Natural killer cell (primary cell): ENCODE measurements at regions of chr1 and their contacts with region 1.

Region 1: GRCh38 chr1:229661022-229661877 is 35.2 kb downstream of the URB2 start:
- DNase-seq: peak; percentile 53 to 80
- ATAC-seq: peak; percentile 60 to 76 (median 70)
- H3K4me3 ChIP-seq: no peak overlapping the region
- H3K4me3 Mint-ChIP-seq: no peak overlapping the region
- H3K27ac ChIP-seq: no peak overlapping the region
- H3K27ac Mint-ChIP-seq: no peak overlapping the region
- H3K4me1 ChIP-seq: peaks cover 13% of the 10 kb centered on the region
- H3K4me1 Mint-ChIP-seq: no peaks in the 10 kb centered on the region
- H3K27me3 ChIP-seq: no peaks in the 10 kb centered on the region
- H3K27me3 Mint-ChIP-seq: no peaks in the 10 kb centered on the region
- CTCF ChIP-seq: peak; percentile 73

Region 2: GRCh38 chr1:229507951-229508822 is 153.1 kb before region 1 on chr1 and contains the start of gene NUP133:
- intact Hi-C with region 1: no loop called
- DNase-seq: peak; percentile 98 to 100
- ATAC-seq: peak; percentile 92 to 96 (median 95)
- H3K4me3 ChIP-seq: peak within 1 kb of the TSS; percentile 83
- H3K4me3 Mint-ChIP-seq: peak within 1 kb of the TSS; percentile 92
- H3K27ac ChIP-seq: peak within 1 kb of the TSS; percentile 92
- H3K27ac Mint-ChIP-seq: peak within 1 kb of the TSS; percentile 96
- H3K4me1 ChIP-seq: peaks cover 7% of the 10 kb centered on the region
- H3K4me1 Mint-ChIP-seq: peaks cover 20 to 25% of the 10 kb centered on the region in 2 donors
- H3K27me3 ChIP-seq: no peaks in the 10 kb centered on the region
- H3K27me3 Mint-ChIP-seq: peaks cover 0 to 4% of the 10 kb centered on the region in 2 donors
- CTCF ChIP-seq: no peak
- total RNA-seq, gene NUP133: 34.5 to 40.1 (median 38.4) TPM

Region 3: DNA sequence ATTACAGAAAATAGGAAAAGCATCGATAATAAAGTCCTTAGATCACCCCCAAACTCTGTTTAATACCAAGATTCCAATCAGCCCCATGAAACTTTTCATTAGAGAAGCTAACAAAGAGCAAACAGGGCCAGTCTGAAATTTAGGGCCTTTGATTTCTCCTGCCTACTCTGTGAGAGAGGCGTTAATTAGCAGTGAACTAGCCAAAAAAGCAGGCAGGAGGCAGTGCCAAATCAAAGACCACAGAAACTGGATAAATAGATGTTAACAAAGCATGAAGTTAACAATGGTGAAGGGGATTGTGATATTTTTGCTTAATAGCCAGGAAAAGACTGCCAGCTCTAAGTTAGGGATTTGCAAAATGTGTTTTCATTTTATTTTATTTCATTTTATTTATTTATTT is 46.5 kb before region 1 on chr1:
- intact Hi-C with region 1: no loop called
- DNase-seq: no peak
- ATAC-seq: no peak
- H3K4me3 ChIP-seq: no peak overlapping the region
- H3K4me3 Mint-ChIP-seq: no peak overlapping the region
- H3K27ac ChIP-seq: no peak overlapping the region
- H3K27ac Mint-ChIP-seq: no peak overlapping the region
- H3K4me1 ChIP-seq: no peaks in the 10 kb centered on the region
- H3K4me1 Mint-ChIP-seq: peaks cover 4 to 9% of the 10 kb centered on the region in 2 donors
- H3K27me3 ChIP-seq: no peaks in the 10 kb centered on the region
- H3K27me3 Mint-ChIP-seq: no peaks in the 10 kb centered on the region
- CTCF ChIP-seq: no peak

Region 4: GRCh38 chr1:229685149-229685548 is 23.9 kb after region 1 on chr1:
- intact Hi-C with region 1: no loop called
- DNase-seq: no peak
- ATAC-seq: no peak
- H3K4me3 ChIP-seq: no peak overlapping the region
- H3K4me3 Mint-ChIP-seq: no peak overlapping the region
- H3K27ac ChIP-seq: no peak overlapping the region
- H3K27ac Mint-ChIP-seq: no peak overlapping the region
- H3K4me1 ChIP-seq: no peaks in the 10 kb centered on the region
- H3K4me1 Mint-ChIP-seq: no peaks in the 10 kb centered on the region
- H3K27me3 ChIP-seq: no peaks in the 10 kb centered on the region
- H3K27me3 Mint-ChIP-seq: peaks cover 11 to 35% of the 10 kb centered on the region in 2 donors
- CTCF ChIP-seq: no peak

Region 5: DNA sequence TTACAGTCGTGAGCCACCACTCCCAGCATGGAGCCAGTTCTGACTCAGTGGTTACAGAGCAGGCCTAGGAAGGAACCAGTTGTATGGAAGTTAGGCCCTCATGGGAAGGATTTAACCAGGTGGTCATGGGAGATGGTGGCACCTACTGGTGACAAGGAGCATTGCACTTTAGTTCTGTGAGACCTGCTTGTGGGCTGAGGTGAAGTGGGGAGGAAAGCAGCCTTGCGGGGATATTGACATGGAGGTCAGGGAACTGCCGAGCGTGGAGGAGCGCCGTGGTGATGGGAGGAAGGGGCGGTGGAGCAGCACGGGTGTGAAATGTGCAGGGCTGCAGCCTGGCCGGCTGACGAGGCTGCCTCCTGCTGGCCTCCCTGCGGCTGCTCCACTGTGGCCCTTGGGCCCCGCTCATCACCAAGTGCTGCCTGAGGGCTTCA is 506.2 kb after region 1 on chr1:
- intact Hi-C with region 1: loop called (anchors 1 kb)
- DNase-seq: peak; percentile 31 to 75
- ATAC-seq: peak; percentile 72 to 88 (median 73)
- H3K4me3 ChIP-seq: no peak overlapping the region
- H3K4me3 Mint-ChIP-seq: no peak overlapping the region
- H3K27ac ChIP-seq: no peak overlapping the region
- H3K27ac Mint-ChIP-seq: no peak overlapping the region
- H3K4me1 ChIP-seq: peaks cover 5% of the 10 kb centered on the region
- H3K4me1 Mint-ChIP-seq: peaks cover 31 to 34% of the 10 kb centered on the region in 2 donors
- H3K27me3 ChIP-seq: no peaks in the 10 kb centered on the region
- H3K27me3 Mint-ChIP-seq: no peaks in the 10 kb centered on the region
- CTCF ChIP-seq: peak; percentile 86